ENCODE measurements at regions of chr5 and their contacts with region 1.

Region 1: DNA sequence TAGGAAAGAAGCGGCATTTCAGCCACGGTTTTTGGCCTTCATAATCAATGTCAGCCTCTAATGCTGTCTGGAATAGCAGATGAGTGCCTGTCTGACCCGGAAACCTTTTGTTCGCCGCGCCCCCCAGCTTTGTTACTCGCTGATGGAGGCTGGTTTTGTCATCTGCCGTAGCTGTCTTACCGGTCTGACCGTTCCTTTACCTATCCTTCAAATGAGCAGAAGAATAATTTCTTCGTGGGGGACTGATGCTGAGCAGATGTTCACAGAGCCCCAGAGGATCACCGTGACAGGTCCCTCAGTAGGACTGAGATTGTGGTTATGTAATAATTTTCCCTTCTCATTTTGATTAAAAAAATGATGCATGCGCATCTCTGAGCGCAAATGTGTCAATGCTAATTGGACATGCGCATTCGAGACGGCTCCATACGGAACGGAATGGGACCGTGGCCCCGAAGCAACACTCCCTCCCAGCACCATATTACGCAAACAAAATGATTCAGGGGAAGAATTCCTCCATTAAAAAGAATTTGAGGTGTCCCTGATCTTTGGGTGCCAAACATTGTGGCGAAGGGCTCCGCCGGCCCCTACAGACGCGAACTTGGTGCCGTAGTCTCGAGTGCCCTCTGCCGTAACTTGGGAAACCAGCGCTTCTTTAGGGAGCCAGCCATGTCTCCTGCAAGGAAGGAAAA is 27.6 kb downstream of the TLX3 start:
- DNase-seq: peak in 1 of 2 donors; percentile 28
- ATAC-seq: peak in 6 of 8 donors; percentile 57 to 84 (median 70)
- H3K4me3 ChIP-seq: peak overlapping the region; percentile 15 to 52 (median 43)
- H3K27ac ChIP-seq: no peak overlapping the region
- H3K4me1 ChIP-seq: peaks cover 0 to 11% (median 8%) of the 10 kb centered on the region in 9 donors
- H3K27me3 ChIP-seq: peaks cover 0 to 96% (median 65%) of the 10 kb centered on the region in 7 donors
- CTCF ChIP-seq: peak; percentile 41 to 77 (median 63)

Region 2: DNA sequence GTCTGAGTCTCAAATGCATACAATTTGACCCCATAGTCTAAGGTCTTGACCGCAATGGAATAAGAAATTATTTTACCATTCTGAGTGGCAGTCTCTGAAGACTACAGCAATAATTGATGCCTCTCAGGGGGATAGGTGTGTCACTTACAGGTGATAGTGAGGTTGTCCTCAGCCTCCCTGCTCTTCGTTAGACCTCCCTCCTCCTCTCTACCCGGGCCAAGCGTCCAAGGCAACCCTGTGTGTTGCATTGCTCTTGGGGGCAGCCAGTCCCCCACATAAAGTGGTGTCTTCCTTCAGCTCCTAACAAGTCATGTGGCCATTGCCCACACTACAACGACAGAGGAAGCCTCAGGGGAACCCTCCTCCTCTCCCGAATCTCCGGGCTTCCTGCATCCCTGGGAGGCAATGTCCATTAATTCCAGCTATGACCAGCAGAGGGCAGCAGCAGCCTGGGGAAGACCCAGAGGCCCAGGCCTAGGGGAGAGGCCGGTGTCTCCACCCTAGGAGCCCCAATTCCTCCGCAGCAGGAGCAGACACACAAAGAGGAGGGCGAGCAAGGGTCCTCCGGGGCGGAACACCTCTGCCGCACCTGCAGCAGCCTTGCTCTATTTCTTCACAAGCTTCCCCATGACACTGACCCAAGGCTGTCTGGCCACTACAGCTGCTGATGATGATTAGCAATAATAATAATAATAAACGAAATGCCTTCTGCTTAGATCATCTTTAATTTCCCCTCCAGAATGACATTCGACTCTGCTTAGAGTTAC is 698.0 kb before region 1 on chr5:
- intact Hi-C with region 1: loop called in 6 of 10 experiments (anchors 2 to 10 kb)
- DNase-seq: peak; percentile 61 to 69
- ATAC-seq: peak; percentile 46 to 76 (median 64)
- H3K4me3 ChIP-seq: no peak overlapping the region
- H3K27ac ChIP-seq: no peak overlapping the region
- H3K4me1 ChIP-seq: peaks cover 0 to 26% (median 11%) of the 10 kb centered on the region in 9 donors
- H3K27me3 ChIP-seq: no peaks in the 10 kb centered on the region
- CTCF ChIP-seq: peak; percentile 71 to 94 (median 87)

Region 3: GRCh38 chr5:170740551-170741205 is 596.0 kb before region 1 on chr5:
- intact Hi-C with region 1: loop called in 8 of 10 experiments (anchors 5 to 10 kb)
- DNase-seq: no peak
- ATAC-seq: no peak
- H3K4me3 ChIP-seq: no peak overlapping the region
- H3K27ac ChIP-seq: no peak overlapping the region
- H3K4me1 ChIP-seq: peaks cover 7 to 21% (median 17%) of the 10 kb centered on the region in 9 donors
- H3K27me3 ChIP-seq: peaks cover 0 to 19% (median 0%) of the 10 kb centered on the region in 7 donors
- CTCF ChIP-seq: no peak

Region 4: GRCh38 chr5:170809551-170809950 is 527.1 kb before region 1 on chr5:
- intact Hi-C with region 1: loop called in 1 of 10 experiments (anchors 10 kb)
- DNase-seq: no peak
- ATAC-seq: peak in 2 of 8 donors; percentile 33 to 39
- H3K4me3 ChIP-seq: no peak overlapping the region
- H3K27ac ChIP-seq: no peak overlapping the region
- H3K4me1 ChIP-seq: no peaks in the 10 kb centered on the region
- H3K27me3 ChIP-seq: peaks cover 0 to 8% (median 0%) of the 10 kb centered on the region in 7 donors
- CTCF ChIP-seq: peak in 4 of 9 donors; percentile 15 to 40 (median 28)